Cardiac septum (tissue), 1 donor: ENCODE measurements at regions of chrX and their contacts with region 1.

Region 1: GRCh38 chrX:107776649-107777535 is 641 bp upstream of the NCBP2L start:
- DNase-seq: peak; percentile 88

Region 2: GRCh38 chrX:107659768-107660167 is 117.1 kb before region 1 on chrX:
- intact Hi-C with region 1: loop called (anchors 2 kb)
- DNase-seq: no peak

Region 3: DNA sequence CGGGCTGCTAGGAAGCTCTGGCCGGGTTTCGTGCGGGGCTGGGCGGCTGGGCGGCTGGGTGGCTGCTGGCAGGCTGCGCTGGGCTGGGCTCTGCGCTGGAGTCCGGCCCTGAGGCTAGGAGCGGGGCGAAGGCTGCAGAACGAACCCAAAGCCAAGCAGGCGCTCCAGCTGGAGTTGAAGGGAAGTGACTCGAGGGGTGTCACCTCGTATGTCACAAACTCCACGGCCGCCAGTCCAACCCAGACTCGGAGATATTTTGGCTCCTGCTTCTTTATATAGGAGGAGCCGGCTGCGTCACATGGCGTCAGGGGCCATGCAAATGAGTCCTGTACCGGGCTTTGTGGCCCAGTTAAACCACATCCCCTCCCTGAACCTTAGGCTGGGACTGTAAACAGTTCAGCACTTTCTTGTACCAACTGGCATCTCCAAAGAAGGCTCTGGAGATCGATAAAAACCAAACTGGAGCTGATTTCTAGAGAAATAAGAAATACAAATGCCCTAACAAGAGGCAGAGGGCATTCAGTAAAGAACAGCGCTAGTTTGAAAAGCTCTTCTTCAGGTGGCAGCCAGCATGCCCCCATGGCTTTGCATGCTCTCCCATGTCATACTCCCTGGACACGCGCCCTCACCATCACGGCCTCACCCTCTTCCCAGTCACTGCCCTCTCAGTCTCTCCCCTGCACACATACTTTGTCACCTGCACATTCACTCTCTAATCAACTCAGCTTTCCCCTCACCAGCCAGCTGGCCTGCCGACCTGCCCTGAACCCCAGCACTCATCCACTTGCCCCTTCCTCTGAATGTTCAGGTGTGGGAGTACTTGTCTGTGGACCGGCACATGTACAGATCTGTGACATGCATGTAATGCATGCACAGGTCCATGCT is 59.8 kb before region 1 on chrX:
- intact Hi-C with region 1: loop called (anchors 2 kb)
- DNase-seq: peak; percentile 94

Region 4: DNA sequence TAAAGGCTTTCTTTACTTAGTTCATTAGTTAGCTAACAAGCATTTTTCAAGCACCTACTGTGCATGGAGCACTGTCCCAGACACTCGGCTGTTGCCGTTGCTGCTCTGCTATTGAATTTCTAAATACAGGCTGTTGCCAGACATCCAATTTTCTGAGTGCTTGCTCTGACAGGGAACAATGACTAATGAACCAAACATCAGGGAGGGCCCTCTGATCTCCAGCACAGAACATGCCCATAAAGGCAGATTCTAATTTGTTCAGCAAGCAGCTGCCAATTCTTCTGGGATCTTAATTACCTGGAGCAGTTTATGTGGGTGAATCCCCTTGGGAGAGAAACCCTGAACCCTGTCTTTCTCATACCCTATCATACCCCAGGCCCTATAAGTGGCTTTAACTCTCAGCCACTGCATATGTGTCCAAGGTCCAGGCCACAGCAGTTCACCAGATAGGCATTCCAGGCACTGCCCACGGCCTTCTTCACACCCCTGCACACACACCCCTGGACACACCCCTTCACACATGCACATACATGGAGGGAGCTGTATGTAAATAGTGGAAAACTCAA is 29.2 kb before region 1 on chrX:
- intact Hi-C with region 1: loop called (anchors 2 kb)
- DNase-seq: no peak

Region 5: GRCh38 chrX:107894038-107894437 is 117.1 kb after region 1 on chrX:
- intact Hi-C with region 1: loop called (anchors 5 kb)
- DNase-seq: no peak